ENCODE measurements at regions of chr1 and their contacts with region 1.

Region 1: DNA sequence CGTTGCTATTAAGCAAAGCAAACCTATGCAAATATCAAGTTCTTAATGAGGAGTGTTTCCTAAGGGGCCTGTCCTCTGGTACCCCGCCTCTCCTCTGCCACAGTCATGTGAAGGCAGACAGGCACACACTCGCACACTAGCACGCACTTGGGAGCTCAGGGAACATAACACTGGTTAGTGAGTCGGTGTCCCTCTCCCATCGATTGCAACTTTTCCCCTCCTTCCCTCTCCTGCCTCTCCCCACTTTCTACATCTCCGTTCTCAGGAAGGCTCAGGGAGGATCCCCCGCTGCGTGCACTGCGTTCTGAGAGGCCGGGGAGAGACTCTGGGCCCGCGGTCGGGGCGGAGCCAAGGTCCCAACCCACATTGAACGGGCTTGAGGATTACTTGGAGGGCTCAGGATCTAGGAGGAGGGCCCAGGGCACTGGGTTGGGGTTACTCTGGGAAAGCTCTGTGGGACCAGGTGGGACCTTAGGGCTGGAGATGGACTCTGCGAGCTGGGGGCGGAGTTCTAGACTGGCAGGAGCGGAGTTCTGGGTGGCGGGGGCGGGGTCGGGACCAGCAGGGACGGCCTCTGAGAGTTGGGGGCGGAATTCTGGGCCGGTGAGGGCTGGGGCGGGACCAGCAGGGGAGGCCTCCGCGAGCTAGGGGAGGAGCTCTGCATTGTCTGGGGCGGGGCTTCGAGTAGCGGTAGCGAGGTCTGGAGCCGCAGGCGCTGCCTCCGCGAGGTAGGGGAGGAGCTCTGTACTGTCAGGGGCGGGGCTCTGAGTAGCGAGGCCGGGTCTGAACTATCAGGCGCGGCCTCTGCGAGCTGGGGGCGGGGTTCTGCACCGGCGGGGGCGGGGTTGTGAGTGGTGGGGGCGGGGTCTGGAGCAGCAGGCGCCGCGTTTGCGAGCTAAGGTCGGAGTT is 533 bp upstream of the LEPR start:
- DNase-seq: peak; percentile 88 to 99
- H3K4me3 ChIP-seq: peak overlapping the region; percentile 59
- H3K27ac ChIP-seq: peak overlapping the region; percentile 90
- H3K4me1 ChIP-seq: peaks cover 55% of the 10 kb centered on the region
- H3K27me3 ChIP-seq: no peaks in the 10 kb centered on the region
- CTCF ChIP-seq: no peak

Region 2: GRCh38 chr1:65067491-65068201 is 352.3 kb before region 1 on chr1:
- CTCF ChIA-PET with region 1: no interaction called
- POLR2A ChIA-PET with region 1: no interaction called
- intact Hi-C with region 1: loop called (anchors 2 kb)
- DNase-seq: peak; percentile 32 to 71
- H3K4me3 ChIP-seq: peak overlapping the region; percentile 79
- H3K27ac ChIP-seq: peak overlapping the region; percentile 36; the same call in 1 of the 2 replicates
- H3K4me1 ChIP-seq: peaks cover 13% of the 10 kb centered on the region; the same call in 1 of the 2 replicates
- H3K27me3 ChIP-seq: no peaks in the 10 kb centered on the region
- CTCF ChIP-seq: no peak

Region 3: GRCh38 chr1:65247513-65248359 is 172.2 kb before region 1 on chr1:
- CTCF ChIA-PET with region 1: interaction called, 9 read pairs
- POLR2A ChIA-PET with region 1: interaction called, 6 read pairs
- intact Hi-C with region 1: loop called (anchors 1 kb)
- DNase-seq: peak; percentile 90 to 97
- H3K4me3 ChIP-seq: no peak overlapping the region; the same call in 1 of the 2 replicates
- H3K27ac ChIP-seq: peak overlapping the region; percentile 85
- H3K4me1 ChIP-seq: peaks cover 19% of the 10 kb centered on the region
- H3K27me3 ChIP-seq: no peaks in the 10 kb centered on the region
- CTCF ChIP-seq: no peak

Region 4: DNA sequence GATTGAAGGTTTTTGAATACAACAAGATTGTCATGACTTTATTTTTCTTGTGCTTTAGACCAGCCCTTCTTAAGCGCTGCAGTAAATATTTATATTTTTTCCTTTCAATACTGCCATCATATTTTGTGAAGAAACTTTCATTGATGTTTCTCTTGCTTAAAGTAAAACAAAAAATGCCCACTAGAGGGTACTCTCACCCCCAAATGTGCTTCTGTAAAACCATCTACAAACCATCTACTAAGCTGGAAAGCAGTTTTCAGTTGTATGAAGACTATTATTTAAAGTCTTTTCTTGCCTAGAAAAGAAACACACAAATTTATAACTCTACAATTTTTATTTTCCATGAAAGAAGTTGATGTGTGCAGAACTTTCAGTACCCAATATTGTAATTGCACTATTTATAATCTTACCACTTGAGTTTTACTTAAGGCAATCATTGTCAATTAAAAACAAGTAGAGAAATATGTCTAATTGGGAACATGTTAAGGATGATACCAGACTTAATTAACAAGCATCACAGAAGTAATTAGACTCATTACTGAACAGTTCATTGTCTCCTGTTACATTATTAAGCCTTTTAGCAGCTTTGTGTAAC is 11.3 kb after region 1 on chr1:
- CTCF ChIA-PET with region 1: interaction called, 7 read pairs
- POLR2A ChIA-PET with region 1: interaction called, 8 read pairs
- intact Hi-C with region 1: loop called (anchors 1 kb)
- DNase-seq: no peak
- H3K4me3 ChIP-seq: no peak overlapping the region
- H3K27ac ChIP-seq: no peak overlapping the region
- H3K4me1 ChIP-seq: peaks cover 22% of the 10 kb centered on the region
- H3K27me3 ChIP-seq: no peaks in the 10 kb centered on the region
- CTCF ChIP-seq: peak; percentile 70

Region 5: DNA sequence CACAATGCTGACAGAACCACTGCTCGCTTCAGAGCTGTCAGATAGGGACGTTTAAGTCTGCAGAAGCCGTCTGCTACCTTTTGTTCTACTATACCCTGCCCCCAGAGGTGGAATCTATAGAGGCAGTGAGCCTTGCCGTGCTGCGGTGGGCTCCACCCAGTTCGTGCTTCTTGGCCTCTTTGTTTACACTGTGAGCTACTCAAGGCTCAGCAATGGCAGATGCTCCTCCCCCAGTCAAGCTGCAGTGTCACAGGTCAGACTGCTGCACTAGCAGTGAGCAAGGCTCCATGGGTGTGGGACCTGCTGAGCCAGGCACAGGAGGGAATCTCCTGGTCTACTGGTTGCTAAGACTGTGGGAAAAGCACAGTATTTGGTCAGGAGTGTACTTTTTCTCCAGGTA is 47.6 kb after region 1 on chr1:
- CTCF ChIA-PET with region 1: interaction called, 4 read pairs
- POLR2A ChIA-PET with region 1: interaction called, 8 read pairs
- intact Hi-C with region 1: loop called (anchors 2 kb)
- DNase-seq: peak; percentile 87 to 90
- H3K4me3 ChIP-seq: peak overlapping the region; percentile 39; the same call in 1 of the 2 replicates
- H3K27ac ChIP-seq: no peak overlapping the region
- H3K4me1 ChIP-seq: peaks cover 12% of the 10 kb centered on the region
- H3K27me3 ChIP-seq: no peaks in the 10 kb centered on the region
- CTCF ChIP-seq: peak; percentile 35; the same call in 1 of the 2 replicates

Region 6: GRCh38 chr1:65630855-65631254 is 210.9 kb after region 1 on chr1:
- CTCF ChIA-PET with region 1: no interaction called
- POLR2A ChIA-PET with region 1: no interaction called
- intact Hi-C with region 1: no loop called
- DNase-seq: no peak
- H3K4me3 ChIP-seq: no peak overlapping the region
- H3K27ac ChIP-seq: no peak overlapping the region
- H3K4me1 ChIP-seq: no peaks in the 10 kb centered on the region
- H3K27me3 ChIP-seq: no peaks in the 10 kb centered on the region
- CTCF ChIP-seq: no peak

Measured in PC-9 (cell line).